ENCODE measurements at regions of chr1 and their contacts with region 1.

Region 1: GRCh38 chr1:8560611-8561544 is 243.0 kb downstream of the SLC45A1 start:
- DNase-seq: no peak
- ATAC-seq: peak; percentile 83

Region 2: DNA sequence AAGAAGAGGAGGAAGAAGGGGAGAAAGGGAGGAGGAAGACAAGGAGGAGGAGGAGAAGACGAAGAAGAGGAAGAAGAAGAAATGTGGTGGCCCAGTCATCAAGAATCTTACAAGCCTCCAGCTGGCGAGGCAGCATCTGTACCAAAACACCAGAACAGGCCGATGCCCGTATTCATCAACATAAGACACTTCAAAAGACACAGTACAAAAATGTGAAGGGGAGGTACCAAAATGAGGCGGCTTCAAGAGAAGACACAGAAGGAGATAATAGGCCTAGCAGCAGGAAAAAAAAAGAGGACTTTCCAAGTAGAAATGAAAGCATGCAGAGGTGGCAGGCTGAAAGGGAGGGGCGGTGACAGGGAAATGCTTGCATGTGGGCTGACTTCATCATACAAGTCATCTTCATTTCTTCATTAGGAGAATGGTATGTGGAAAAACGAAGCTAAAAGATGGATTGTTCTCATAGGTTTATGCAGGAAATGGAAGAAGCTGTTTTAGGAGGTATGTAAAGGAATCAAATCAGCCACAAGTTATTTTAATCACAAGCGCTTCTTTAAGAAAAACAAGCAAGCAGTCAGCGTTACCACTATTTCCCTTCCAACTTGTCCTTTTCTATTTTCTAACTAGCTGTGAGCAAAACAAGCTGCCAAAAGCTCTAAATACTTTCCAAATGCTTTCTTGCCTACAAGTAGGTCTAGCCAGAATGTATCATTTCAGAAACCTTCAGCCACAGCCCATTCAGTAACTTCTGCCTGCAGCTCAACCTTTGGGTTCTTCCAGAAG is 50.6 kb before region 1 on chr1:
- intact Hi-C with region 1: no loop called
- DNase-seq: no peak
- ATAC-seq: no peak

Region 3: GRCh38 chr1:8727809-8728213 is 166.9 kb after region 1 on chr1:
- intact Hi-C with region 1: loop called in 1 of 2 experiments (anchors 5 kb)
- DNase-seq: no peak
- ATAC-seq: no peak

Measured in left colon (tissue), 2 donors.